PC-9 (cell line): ENCODE measurements at regions of chr3 and their contacts with region 1.

Region 1: DNA sequence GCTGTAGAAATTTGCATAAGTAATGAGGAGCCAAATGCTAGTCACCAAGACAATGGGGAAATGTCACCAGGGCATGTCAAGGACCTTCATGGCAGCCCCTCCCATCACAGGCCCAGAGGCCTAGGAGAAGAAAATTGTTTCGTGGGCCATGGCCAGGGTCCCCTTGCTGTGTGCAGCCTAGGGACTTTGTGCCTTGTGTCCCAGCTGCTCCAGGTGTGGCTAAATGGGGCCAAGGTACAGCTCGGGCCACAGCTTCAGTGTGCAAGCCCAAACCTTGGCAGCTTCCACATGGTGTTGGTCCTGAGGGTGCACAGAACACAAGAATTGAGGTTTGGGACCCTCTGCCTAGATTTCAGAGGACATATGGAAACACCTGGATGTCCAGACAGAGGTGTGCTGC is 208.8 kb upstream of the TBC1D5 start:
- DNase-seq: no peak
- H3K4me3 ChIP-seq: no peak overlapping the region
- H3K27ac ChIP-seq: no peak overlapping the region
- H3K4me1 ChIP-seq: no peaks in the 10 kb centered on the region
- H3K27me3 ChIP-seq: no peaks in the 10 kb centered on the region
- CTCF ChIP-seq: no peak

Region 2: GRCh38 chr3:17874632-17875031 is 76.6 kb before region 1 on chr3:
- CTCF ChIA-PET with region 1: interaction called, 12 read pairs
- POLR2A ChIA-PET with region 1: no interaction called
- intact Hi-C with region 1: no loop called
- DNase-seq: no peak
- H3K4me3 ChIP-seq: no peak overlapping the region
- H3K27ac ChIP-seq: no peak overlapping the region
- H3K4me1 ChIP-seq: no peaks in the 10 kb centered on the region
- H3K27me3 ChIP-seq: no peaks in the 10 kb centered on the region
- CTCF ChIP-seq: no peak